Endothelial cell of umbilical vein (primary cell): ENCODE measurements at regions of chr7 and their contacts with region 1.

Region 1: DNA sequence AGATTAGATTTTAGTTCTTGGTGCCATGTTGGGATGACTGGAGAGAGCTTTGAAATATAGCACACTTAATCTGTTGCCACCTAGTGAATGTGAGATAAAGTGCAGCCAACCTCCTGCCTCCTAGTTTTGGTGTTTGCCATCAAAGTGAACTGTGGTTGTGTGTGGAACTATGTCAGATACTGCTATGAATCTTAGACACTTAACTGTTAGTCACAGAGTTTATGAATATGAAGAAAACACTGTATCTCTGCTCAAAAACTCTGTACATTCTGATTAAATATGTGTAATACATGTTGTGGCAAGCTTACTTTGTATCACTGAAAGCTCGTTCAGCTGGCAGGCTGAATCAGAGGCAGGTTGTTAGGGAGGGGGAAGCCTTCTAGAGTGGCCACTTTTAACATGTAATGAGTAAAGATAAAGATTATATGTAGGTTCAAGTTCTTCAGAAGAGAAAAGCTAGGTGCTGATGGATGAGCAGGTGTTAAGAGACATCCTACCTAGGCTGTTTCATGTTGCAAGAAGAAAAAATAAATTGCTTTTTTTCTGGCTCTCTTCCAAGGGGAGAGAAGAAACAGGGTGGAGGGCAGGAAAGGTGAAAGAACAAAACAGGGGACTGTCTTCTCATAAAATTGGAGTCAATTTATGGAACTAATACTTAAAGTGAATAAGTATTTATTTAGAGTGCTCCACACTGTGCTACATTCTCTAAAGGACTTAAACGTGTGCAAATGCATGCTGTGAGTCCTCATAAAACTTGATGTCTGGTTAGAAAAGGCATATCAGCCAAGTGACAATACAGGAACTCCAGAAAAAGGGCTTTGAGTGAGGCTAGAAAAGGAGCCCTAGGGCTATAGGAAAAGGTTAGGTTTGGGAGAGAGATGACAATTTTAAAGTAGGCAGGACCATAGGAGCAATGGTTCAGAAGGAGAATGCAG is 14.1 kb upstream of the LAMB1 start:
- DNase-seq: peak; percentile 87
- H3K4me3 ChIP-seq: no peak overlapping the region
- H3K27ac ChIP-seq: peak overlapping the region; percentile 96
- H3K4me1 ChIP-seq: peaks cover 67% of the 10 kb centered on the region
- H3K27me3 ChIP-seq: no peaks in the 10 kb centered on the region
- CTCF ChIP-seq: peak; percentile 52
- POLR2A ChIP-seq: no peak

Region 2: GRCh38 chr7:107933386-107934013 is 83.6 kb before region 1 on chr7:
- CTCF ChIA-PET with region 1: interaction called, 10 read pairs
- POLR2A ChIA-PET with region 1: no interaction called
- dilution Hi-C with region 1: no loop called
- intact Hi-C with region 1: no loop called
- DNase-seq: no peak
- H3K4me3 ChIP-seq: no peak overlapping the region
- H3K27ac ChIP-seq: no peak overlapping the region
- H3K4me1 ChIP-seq: peaks cover 7% of the 10 kb centered on the region
- H3K27me3 ChIP-seq: no peaks in the 10 kb centered on the region
- CTCF ChIP-seq: no peak
- POLR2A ChIP-seq: no peak

Region 3: GRCh38 chr7:107982918-107983389 is 34.2 kb before region 1 on chr7:
- CTCF ChIA-PET with region 1: interaction called, 25 read pairs
- POLR2A ChIA-PET with region 1: interaction called, 7 read pairs
- dilution Hi-C with region 1: no loop called
- intact Hi-C with region 1: no loop called
- DNase-seq: no peak
- H3K4me3 ChIP-seq: no peak overlapping the region
- H3K27ac ChIP-seq: no peak overlapping the region
- H3K4me1 ChIP-seq: no peaks in the 10 kb centered on the region
- H3K27me3 ChIP-seq: no peaks in the 10 kb centered on the region
- CTCF ChIP-seq: peak; percentile 25
- POLR2A ChIP-seq: no peak

Region 4: GRCh38 chr7:107995184-107996071 is 21.7 kb before region 1 on chr7:
- CTCF ChIA-PET with region 1: interaction called, 284 read pairs
- POLR2A ChIA-PET with region 1: interaction called, 49 read pairs
- dilution Hi-C with region 1: no loop called
- intact Hi-C with region 1: loop called (anchors 1 kb)
- DNase-seq: peak; percentile 99
- H3K4me3 ChIP-seq: peak overlapping the region in 1 of 3 experiments; percentile 30
- H3K27ac ChIP-seq: peak overlapping the region; percentile 99
- H3K4me1 ChIP-seq: peaks cover 72% of the 10 kb centered on the region
- H3K27me3 ChIP-seq: no peaks in the 10 kb centered on the region
- CTCF ChIP-seq: no peak
- POLR2A ChIP-seq: peak; percentile 55

Region 5: GRCh38 chr7:108030516-108030915 is 13.4 kb after region 1 on chr7:
- CTCF ChIA-PET with region 1: interaction called, 11 read pairs
- POLR2A ChIA-PET with region 1: interaction called, 6 read pairs
- dilution Hi-C with region 1: no loop called
- intact Hi-C with region 1: no loop called
- DNase-seq: no peak
- H3K4me3 ChIP-seq: no peak overlapping the region
- H3K27ac ChIP-seq: peak overlapping the region; percentile 43
- H3K4me1 ChIP-seq: peaks cover 13% of the 10 kb centered on the region
- H3K27me3 ChIP-seq: no peaks in the 10 kb centered on the region
- CTCF ChIP-seq: no peak
- POLR2A ChIP-seq: no peak

Region 6: GRCh38 chr7:108094933-108095710 is 78.0 kb after region 1 on chr7:
- CTCF ChIA-PET with region 1: interaction called, 57 read pairs
- POLR2A ChIA-PET with region 1: no interaction called
- dilution Hi-C with region 1: no loop called
- intact Hi-C with region 1: loop called (anchors 1 kb)
- DNase-seq: peak; percentile 86
- H3K4me3 ChIP-seq: no peak overlapping the region
- H3K27ac ChIP-seq: peak overlapping the region; percentile 58
- H3K4me1 ChIP-seq: peaks cover 29% of the 10 kb centered on the region
- H3K27me3 ChIP-seq: no peaks in the 10 kb centered on the region
- CTCF ChIP-seq: no peak
- POLR2A ChIP-seq: no peak